Activated CD4-positive, alpha-beta memory T cell treated with anti-CD3 and anti-CD28 coated beads for 36 hours (primary cell): ENCODE measurements at regions of chr5 and their contacts with region 1.

Region 1: GRCh38 chr5:157761690-157762621 is 18.4 kb downstream of the LSM11 start:
- DNase-seq: no peak
- H3K4me3 Mint-ChIP-seq: no peak overlapping the region
- H3K27ac Mint-ChIP-seq: no peak overlapping the region
- H3K4me1 Mint-ChIP-seq: peaks cover 15% of the 10 kb centered on the region
- H3K27me3 Mint-ChIP-seq: no peaks in the 10 kb centered on the region

Region 2: DNA sequence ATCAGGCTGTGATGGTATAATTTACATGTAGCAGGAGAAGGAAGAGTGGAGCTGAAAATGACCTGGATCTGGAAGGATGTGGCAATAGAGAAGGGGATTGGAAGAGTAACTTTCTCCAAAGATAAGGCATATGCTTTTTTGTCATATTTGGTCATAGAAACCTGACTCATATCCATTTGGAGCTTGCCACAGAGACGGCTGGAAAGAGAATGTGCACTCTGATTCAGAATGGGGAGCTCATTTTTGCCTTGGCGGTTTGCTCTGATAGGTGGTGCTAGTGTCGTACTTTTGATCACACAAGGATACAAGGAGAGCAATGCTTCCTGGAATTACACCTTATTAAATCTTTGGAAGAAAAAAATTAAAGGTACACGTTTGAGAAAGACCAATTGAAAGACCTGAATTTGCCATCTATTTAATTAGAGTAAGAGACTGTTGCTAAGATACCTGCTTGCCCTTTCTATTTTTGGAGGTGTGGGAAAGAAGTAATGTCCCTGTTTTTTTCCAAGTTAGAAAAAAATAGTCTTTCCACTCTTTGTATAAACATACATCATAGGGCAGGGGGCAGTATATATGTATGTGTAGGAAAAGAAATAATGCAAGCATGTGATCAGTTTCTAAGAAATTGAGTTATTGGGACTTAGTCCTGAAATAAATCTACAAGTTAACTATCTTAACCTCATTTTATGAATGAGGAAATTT is 13.0 kb before region 1 on chr5:
- CTCF ChIA-PET with region 1: interaction called, 19 read pairs
- POLR2A ChIA-PET with region 1: no interaction called
- intact Hi-C with region 1: no loop called
- DNase-seq: peak; percentile 44
- H3K4me3 Mint-ChIP-seq: no peak overlapping the region
- H3K27ac Mint-ChIP-seq: peak overlapping the region; percentile 1
- H3K4me1 Mint-ChIP-seq: peaks cover 55% of the 10 kb centered on the region
- H3K27me3 Mint-ChIP-seq: no peaks in the 10 kb centered on the region

Region 3: DNA sequence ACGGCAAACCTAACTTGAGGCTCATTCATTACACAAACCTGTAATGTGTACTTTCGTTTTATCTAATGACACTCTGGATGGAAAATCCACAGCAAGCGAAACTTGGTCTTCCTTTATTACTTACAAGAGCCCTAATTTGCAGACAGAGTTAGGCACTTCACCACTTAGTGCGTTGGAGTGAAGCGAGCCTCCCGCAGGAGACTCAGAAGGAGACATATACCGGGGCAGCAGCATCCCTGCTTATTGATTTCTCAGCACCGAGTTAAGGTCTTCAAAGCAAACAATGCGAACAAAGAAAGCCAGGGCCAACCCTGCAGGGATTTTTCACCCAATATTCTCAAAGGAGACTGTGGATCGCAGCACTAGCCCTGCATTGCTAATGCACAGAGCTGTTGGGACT is 10.2 kb after region 1 on chr5:
- CTCF ChIA-PET with region 1: interaction called, 34 read pairs
- POLR2A ChIA-PET with region 1: no interaction called
- intact Hi-C with region 1: no loop called
- DNase-seq: peak; percentile 54
- H3K4me3 Mint-ChIP-seq: no peak overlapping the region
- H3K27ac Mint-ChIP-seq: no peak overlapping the region
- H3K4me1 Mint-ChIP-seq: peaks cover 9% of the 10 kb centered on the region
- H3K27me3 Mint-ChIP-seq: peaks cover 11% of the 10 kb centered on the region

Region 4: DNA sequence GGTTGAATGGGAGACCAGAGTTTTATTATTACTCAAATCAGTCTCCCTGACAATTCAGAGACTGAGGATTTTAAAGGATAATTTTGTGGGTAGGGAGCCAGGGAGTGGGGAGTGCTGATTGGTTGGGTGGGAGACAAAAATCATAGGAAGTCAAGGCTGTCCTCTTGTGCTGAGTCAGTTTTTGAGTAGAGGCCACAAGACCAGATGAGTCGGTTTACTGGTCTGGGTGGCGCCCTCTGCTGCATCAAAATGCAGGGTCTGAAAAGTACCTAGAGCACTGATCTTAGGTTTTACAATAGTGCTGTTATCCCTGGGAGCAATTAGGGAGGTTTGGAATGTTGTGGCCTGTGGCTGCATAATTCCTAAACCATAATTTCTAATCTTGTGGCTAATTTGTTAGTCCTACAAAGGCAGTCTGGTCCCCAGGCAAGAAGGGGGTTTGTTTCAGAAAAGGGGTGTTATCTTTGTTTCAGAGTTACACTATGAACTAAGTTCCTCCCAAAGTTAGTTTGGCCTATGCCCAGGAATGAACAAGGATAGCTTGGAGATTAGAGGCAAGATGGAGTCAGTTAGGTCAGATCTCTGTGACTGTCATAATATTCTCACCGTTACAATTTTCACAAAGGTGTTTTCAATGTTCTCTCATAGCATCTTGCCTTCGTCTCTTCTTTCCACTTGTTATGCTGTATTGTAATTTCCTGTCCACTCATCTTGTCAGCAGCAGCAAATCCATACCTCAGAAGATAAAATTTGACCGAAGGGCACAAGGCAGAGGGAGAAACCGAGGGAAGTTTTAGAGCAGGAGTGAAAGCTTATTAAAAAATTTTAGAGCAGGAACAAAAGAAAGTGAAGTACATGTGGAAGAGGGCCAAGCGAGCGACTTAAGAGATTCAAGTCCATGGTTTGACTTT is 156.2 kb after region 1 on chr5:
- CTCF ChIA-PET with region 1: interaction called, 3 read pairs
- POLR2A ChIA-PET with region 1: no interaction called
- intact Hi-C with region 1: loop called (anchors 10 kb)
- DNase-seq: peak; percentile 83
- H3K4me3 Mint-ChIP-seq: no peak overlapping the region
- H3K27ac Mint-ChIP-seq: no peak overlapping the region
- H3K4me1 Mint-ChIP-seq: peaks cover 22% of the 10 kb centered on the region
- H3K27me3 Mint-ChIP-seq: no peaks in the 10 kb centered on the region

Region 5: GRCh38 chr5:157994906-157995519 is 233.1 kb after region 1 on chr5:
- CTCF ChIA-PET with region 1: interaction called, 10 read pairs
- POLR2A ChIA-PET with region 1: no interaction called
- intact Hi-C with region 1: loop called (anchors 1 kb)
- DNase-seq: peak; percentile 66
- H3K4me3 Mint-ChIP-seq: no peak overlapping the region
- H3K27ac Mint-ChIP-seq: no peak overlapping the region
- H3K4me1 Mint-ChIP-seq: peaks cover 13% of the 10 kb centered on the region
- H3K27me3 Mint-ChIP-seq: peaks cover 30% of the 10 kb centered on the region